ENCODE measurements at regions of chr2 and their contacts with region 1.

Region 1: DNA sequence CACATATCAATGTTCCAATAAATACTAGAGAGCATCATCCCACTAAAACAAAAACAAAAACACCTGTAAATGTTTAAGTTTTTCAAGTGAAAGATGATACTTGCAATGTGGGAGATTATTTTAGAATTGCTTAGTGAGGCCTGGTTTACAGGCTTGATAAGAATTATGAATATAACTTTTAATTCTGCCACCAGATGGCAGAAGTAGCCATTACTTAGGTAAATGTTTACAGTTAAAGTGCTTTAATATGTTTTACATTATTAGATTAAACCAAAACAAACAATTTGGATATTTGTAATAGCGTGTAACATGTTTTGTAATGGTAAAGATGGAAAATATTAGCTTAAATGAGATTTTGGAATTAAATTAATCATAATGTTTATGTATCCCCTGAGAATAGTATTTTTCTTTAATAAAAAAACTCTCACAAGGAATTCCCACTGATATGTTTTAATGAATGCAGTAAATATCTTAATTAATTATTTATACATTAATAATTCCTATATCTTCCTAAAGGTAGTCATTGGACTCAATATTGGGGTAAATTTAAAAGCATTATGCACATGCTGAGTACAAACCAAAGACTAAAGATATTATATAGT is 522.0 kb downstream of the SPAG16 start:
- DNase-seq: peak; percentile 38
- ATAC-seq: no peak; the same call in 1 of the 2 replicates
- H3K4me3 ChIP-seq: no peak overlapping the region
- H3K27ac ChIP-seq: no peak overlapping the region
- H3K4me1 ChIP-seq: no peaks in the 10 kb centered on the region
- H3K27me3 ChIP-seq: no peaks in the 10 kb centered on the region
- CTCF ChIP-seq: peak; percentile 48
- POLR2A ChIP-seq: no peak
- RAD21 ChIP-seq: peak; percentile 59

Region 2: GRCh38 chr2:213251618-213252017 is 554.6 kb before region 1 on chr2:
- CTCF ChIA-PET with region 1: no interaction called
- POLR2A ChIA-PET with region 1: no interaction called
- dilution Hi-C with region 1: no loop called
- in situ Hi-C with region 1: loop called (anchors 25 kb)
- intact Hi-C with region 1: loop called (anchors 5 kb)
- DNase-seq: peak; percentile 81
- ATAC-seq: peak; percentile 92
- H3K4me3 ChIP-seq: no peak overlapping the region
- H3K27ac ChIP-seq: peak overlapping the region; percentile 18; the same call in 1 of the 2 replicates
- H3K4me1 ChIP-seq: no peaks in the 10 kb centered on the region
- H3K27me3 ChIP-seq: no peaks in the 10 kb centered on the region
- CTCF ChIP-seq: peak; percentile 74
- POLR2A ChIP-seq: no peak
- RAD21 ChIP-seq: peak; percentile 85

Region 3: GRCh38 chr2:214019229-214019972 is 213.2 kb after region 1 on chr2:
- CTCF ChIA-PET with region 1: no interaction called
- POLR2A ChIA-PET with region 1: no interaction called
- dilution Hi-C with region 1: no loop called
- in situ Hi-C with region 1: no loop called
- intact Hi-C with region 1: loop called (anchors 5 kb)
- DNase-seq: peak; percentile 97
- ATAC-seq: peak; percentile 99
- H3K4me3 ChIP-seq: no peak overlapping the region
- H3K27ac ChIP-seq: peak overlapping the region; percentile 45
- H3K4me1 ChIP-seq: peaks cover 3% of the 10 kb centered on the region; the same call in 1 of the 2 replicates
- H3K27me3 ChIP-seq: no peaks in the 10 kb centered on the region
- CTCF ChIP-seq: no peak
- POLR2A ChIP-seq: no peak
- RAD21 ChIP-seq: no peak

Region 4: DNA sequence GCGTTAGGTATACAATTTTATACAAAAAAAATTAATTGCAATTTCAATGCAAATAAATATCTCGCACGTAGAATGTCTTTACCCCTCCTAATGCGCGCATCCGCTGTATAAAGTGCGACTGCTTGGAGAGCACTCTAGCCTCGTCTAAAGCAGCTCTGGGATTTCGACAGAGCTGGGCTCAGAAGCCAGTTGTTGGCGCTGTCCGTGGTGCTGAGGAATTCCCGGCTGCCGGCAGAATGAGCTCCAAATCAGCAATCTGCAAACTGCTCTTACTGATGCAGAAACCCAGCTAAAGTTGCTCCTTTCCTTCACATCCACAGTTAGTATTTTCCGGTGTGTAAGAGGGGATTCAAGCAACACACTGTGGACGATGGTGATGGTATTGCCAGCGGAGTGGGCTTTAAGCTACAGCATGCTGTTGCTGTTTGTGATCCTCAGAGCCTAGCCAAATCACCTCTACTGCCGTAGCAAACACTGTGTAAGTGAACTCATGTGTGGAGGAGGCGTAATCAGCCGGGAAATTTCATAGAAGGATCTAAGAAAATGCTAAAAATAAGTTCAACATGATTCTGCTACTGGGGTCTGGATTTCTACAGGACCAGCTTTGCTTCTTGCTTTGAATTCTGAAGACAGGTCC is 604.8 kb after region 1 on chr2 and contains the start of gene VWC2L:
- CTCF ChIA-PET with region 1: no interaction called
- POLR2A ChIA-PET with region 1: no interaction called
- dilution Hi-C with region 1: no loop called
- in situ Hi-C with region 1: no loop called
- intact Hi-C with region 1: loop called (anchors 5 kb)
- DNase-seq: peak; percentile 76
- ATAC-seq: peak; percentile 99
- H3K4me3 ChIP-seq: no peak within 1 kb of the TSS
- H3K27ac ChIP-seq: no peak within 1 kb of the TSS
- H3K4me1 ChIP-seq: no peaks in the 10 kb centered on the region
- H3K27me3 ChIP-seq: no peaks in the 10 kb centered on the region
- CTCF ChIP-seq: no peak
- POLR2A ChIP-seq: no peak
- RAD21 ChIP-seq: peak; percentile 27; the same call in 1 of the 2 replicates
- total RNA-seq, gene VWC2L: not detected in 2 replicates

Region 5: GRCh38 chr2:215002500-215002899 is 1196.3 kb after region 1 on chr2:
- CTCF ChIA-PET with region 1: no interaction called
- POLR2A ChIA-PET with region 1: no interaction called
- dilution Hi-C with region 1: no loop called
- in situ Hi-C with region 1: no loop called
- intact Hi-C with region 1: loop called (anchors 2 kb)
- DNase-seq: peak; percentile 46
- ATAC-seq: 0 out of 2 replicates have a peak, but pooled peaks have one; percentile 57
- H3K4me3 ChIP-seq: no peak overlapping the region
- H3K27ac ChIP-seq: no peak overlapping the region
- H3K4me1 ChIP-seq: no peaks in the 10 kb centered on the region
- H3K27me3 ChIP-seq: no peaks in the 10 kb centered on the region; the same call in 1 of the 2 replicates
- CTCF ChIP-seq: peak; percentile 62
- POLR2A ChIP-seq: no peak
- RAD21 ChIP-seq: peak; percentile 48

Region 6: DNA sequence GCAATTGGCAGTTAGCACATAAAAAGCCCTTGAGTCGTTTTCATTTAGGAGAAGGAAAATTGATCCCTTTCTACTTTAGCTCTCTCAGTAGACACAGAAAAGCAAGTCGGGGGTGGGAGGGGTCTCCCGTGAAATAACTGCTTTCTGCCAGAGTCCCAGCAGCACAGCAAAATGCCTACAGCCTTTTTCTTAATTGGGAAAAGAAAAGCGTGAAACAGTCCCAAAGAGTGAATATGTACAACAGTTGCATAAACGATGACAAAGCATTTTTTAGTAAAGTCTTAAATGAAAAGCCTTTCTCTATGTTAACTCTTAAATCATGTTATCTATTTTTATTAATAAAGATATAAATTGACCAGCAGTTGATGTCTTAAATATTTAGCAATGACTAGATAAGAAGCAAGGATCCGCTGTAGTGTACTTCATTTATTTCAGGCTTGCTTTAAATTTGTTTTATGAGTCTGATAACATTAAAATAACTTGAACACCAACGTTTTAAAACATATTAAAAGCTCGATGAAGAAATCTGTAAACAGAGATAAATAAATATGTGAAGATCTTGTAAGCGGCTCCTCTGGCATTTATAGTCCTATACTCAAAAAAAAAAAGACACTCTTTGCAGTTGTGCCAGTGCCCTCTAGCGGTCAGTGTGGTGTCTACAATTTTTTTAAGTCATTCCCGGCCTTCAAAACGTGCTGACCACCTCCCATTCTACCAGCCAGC is 1463.3 kb after region 1 on chr2:
- CTCF ChIA-PET with region 1: no interaction called
- POLR2A ChIA-PET with region 1: no interaction called
- dilution Hi-C with region 1: no loop called
- in situ Hi-C with region 1: no loop called
- intact Hi-C with region 1: loop called (anchors 5 kb)
- DNase-seq: peak; percentile 80
- ATAC-seq: peak; percentile 85
- H3K4me3 ChIP-seq: no peak overlapping the region
- H3K27ac ChIP-seq: no peak overlapping the region
- H3K4me1 ChIP-seq: no peaks in the 10 kb centered on the region
- H3K27me3 ChIP-seq: no peaks in the 10 kb centered on the region
- CTCF ChIP-seq: peak; percentile 78
- POLR2A ChIP-seq: no peak
- RAD21 ChIP-seq: peak; percentile 70